Dendritic cell treated with granulocyte-macrophage colony-stimulating factor and Interleukin-4, amounts not matched to agents 40 ng/mL and 50 ng/mL, for 4 days (primary cell): ENCODE measurements at regions of chrX and their contacts with region 1.

Region 1: DNA sequence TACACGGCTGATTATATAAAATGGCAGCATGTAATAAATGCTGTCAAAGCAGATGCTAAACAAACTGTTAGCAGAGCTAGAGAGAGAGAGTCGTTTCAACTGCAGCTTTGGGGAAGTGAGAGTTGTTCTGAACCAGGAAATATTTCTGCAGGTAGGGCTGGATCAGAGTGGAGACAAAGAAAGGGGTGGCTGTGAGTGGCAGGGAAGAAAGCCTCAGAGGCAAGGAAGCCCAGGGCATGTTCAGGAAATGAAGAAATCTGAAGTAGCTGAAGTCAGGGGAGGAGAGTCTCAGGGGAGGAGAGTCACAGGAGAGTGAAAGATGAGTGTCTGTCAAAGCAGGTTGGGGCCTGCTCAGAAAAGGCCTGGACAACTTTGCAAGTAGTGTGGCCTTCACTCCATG is 48.4 kb upstream of the RPS6KA3 start:
- H3K4me3 Mint-ChIP-seq: no peak overlapping the region
- H3K27ac Mint-ChIP-seq: peak overlapping the region; percentile 82
- H3K4me1 Mint-ChIP-seq: peaks cover 76% of the 10 kb centered on the region
- H3K27me3 Mint-ChIP-seq: no peaks in the 10 kb centered on the region

Region 2: GRCh38 chrX:20029728-20030127 is 285.4 kb before region 1 on chrX:
- intact Hi-C with region 1: no loop called
- H3K4me3 Mint-ChIP-seq: no peak overlapping the region
- H3K27ac Mint-ChIP-seq: no peak overlapping the region
- H3K4me1 Mint-ChIP-seq: no peaks in the 10 kb centered on the region
- H3K27me3 Mint-ChIP-seq: no peaks in the 10 kb centered on the region

Region 3: DNA sequence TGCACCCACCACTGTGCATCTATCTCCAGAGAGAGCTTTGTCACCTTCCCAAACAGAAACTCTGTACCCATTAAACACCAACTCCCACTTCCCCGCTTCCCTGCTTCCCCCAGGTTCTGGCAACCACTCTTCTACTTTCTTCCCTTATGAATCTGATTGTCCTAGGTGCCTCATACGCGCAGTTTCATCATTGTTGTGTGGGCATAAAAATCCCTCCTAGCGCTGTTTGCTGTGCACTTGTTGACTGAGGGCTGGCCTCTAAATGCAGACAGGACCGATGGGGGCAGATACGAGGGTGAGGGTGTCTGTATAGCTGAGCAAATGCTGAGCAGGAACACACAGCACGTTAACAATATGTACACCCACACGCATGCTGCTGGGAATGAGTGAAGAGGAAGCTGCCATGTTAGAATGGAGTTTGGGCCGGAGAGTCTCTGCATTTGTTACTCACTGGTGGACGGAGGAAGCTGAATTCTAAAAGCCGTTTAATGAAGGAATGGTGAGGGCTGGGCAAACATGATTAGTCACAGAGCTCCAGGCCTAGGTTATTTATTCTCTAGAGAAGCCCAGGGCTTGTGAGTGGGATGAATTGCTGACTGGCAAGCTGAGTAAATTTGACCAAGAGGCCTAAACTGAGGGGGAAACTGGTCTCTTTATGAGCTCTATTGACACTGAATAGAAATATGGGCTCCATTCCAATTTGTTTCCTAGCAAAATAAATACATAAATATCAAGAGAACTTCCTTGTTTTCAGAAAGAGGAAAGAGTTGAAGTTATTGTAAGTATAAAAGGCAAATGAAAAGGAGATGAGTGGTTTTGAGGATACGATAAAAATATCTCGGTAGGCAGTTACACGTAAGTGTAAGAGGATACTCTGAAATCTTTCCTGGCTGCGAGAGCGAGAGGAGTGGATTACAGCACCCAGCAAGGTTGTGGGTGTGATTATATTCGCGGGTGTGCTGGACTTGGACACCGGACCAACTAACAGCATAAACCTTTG is 47.4 kb after region 1 on chrX:
- intact Hi-C with region 1: loop called (anchors 10 kb)
- H3K4me3 Mint-ChIP-seq: peak overlapping the region; percentile 61
- H3K27ac Mint-ChIP-seq: peak overlapping the region; percentile 98
- H3K4me1 Mint-ChIP-seq: peaks cover 25% of the 10 kb centered on the region
- H3K27me3 Mint-ChIP-seq: no peaks in the 10 kb centered on the region

Region 4: DNA sequence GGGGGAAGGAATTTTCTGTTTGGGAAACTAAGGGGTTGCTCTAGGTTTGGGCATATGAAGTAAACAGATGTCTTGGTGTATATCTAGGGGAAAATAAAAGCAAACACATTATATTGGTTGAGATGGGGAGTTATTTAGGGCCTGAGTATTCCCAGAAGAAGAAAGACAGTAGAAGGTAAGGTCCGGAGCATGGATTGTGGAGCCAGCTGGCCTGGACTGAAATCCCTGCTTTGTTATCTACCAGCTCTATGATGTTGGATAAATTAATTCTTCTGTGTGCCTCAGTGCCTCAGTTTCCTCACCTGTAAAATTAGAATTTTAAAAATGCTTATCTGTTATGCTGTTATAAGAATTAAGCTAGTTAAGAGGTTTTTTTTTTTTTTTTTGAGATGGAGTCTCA is 223.8 kb after region 1 on chrX:
- intact Hi-C with region 1: no loop called
- H3K4me3 Mint-ChIP-seq: no peak overlapping the region
- H3K27ac Mint-ChIP-seq: no peak overlapping the region
- H3K4me1 Mint-ChIP-seq: no peaks in the 10 kb centered on the region
- H3K27me3 Mint-ChIP-seq: peaks cover 7% of the 10 kb centered on the region